GM12878 (cell line): ENCODE measurements at regions of chr2 and their contacts with region 1.

Region 1: DNA sequence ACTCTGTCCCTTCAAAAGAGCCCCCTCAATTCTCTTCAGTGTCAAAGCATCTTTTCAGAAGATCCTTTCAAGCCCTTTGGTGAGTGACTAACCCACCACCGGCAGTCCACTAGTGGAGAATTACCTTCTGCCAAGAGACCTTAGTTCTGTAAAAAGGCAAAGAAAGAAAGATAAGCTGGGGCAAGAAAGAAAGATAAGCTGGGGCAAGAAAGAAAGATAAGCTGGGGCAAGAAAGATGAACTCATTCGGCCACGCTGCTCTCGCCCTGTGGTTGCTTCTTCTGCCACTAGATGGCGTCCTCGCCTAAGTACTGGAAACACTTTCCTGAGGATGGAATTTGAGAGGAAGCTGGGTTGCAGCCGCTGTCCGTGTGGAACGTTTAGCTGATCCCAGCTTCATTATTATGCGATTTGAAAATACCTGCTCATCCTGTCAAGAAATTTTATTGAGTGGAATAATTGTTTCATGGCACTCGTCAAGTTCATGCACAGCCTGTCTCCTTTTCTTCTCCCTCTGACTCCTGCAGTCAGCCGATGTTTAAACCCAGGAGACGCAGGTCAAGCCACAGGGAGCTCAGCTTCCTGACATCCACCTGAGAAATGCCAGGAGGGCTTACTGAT is 17.3 kb upstream of the ANXA4 start:
- DNase-seq: no peak
- ATAC-seq: peak; percentile 98
- H3K4me3 ChIP-seq: peak overlapping the region; percentile 69; the same call in 1 of the 2 replicates
- H3K27ac ChIP-seq: no peak overlapping the region
- H3K4me1 ChIP-seq: no peaks in the 10 kb centered on the region; the same call in 1 of the 2 replicates
- H3K27me3 ChIP-seq: no peaks in the 10 kb centered on the region
- CTCF ChIP-seq: peak; percentile 81 to 85 (median 82)
- EP300 ChIP-seq: no peak
- POLR2A ChIP-seq: no peak
- RAD21 ChIP-seq: peak; percentile 94

Region 2: DNA sequence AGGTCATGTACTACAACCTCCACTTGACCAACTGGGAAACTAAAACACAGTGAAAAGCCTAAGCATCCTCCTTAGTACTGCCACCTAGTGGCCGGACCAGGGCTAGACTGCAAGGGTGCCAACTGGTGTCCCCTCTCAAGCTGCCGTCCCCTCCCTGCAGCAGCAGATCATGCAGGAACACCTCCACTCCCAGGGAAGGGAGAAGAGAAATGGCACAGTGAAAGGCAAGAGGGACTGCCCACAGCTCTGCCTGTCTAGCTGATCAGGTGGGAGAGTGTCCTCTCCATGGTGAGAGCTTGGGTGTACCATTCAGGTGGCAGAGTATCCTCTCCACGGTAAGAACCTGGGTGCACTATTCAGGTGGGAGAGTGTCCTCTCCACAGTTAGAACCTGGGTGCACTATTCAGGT is 159.2 kb before region 1 on chr2:
- CTCF ChIA-PET with region 1: interaction called, 293 read pairs
- POLR2A ChIA-PET with region 1: no interaction called
- RAD21 ChIA-PET with region 1: interaction called, 10 read pairs
- SMC1A ChIA-PET with region 1: interaction called, 16 read pairs
- in situ Hi-C with region 1: no loop called
- intact Hi-C with region 1: no loop called
- DNase-seq: peak; percentile 40
- ATAC-seq: peak; percentile 99
- H3K4me3 ChIP-seq: no peak overlapping the region
- H3K27ac ChIP-seq: no peak overlapping the region
- H3K4me1 ChIP-seq: 0 out of 2 replicates have a peak, but pooled peaks cover 2% of the 10 kb centered on the region
- H3K27me3 ChIP-seq: no peaks in the 10 kb centered on the region
- CTCF ChIP-seq: peak; percentile 83 to 97 (median 89)
- EP300 ChIP-seq: no peak
- POLR2A ChIP-seq: no peak
- RAD21 ChIP-seq: peak; percentile 71

Region 3: DNA sequence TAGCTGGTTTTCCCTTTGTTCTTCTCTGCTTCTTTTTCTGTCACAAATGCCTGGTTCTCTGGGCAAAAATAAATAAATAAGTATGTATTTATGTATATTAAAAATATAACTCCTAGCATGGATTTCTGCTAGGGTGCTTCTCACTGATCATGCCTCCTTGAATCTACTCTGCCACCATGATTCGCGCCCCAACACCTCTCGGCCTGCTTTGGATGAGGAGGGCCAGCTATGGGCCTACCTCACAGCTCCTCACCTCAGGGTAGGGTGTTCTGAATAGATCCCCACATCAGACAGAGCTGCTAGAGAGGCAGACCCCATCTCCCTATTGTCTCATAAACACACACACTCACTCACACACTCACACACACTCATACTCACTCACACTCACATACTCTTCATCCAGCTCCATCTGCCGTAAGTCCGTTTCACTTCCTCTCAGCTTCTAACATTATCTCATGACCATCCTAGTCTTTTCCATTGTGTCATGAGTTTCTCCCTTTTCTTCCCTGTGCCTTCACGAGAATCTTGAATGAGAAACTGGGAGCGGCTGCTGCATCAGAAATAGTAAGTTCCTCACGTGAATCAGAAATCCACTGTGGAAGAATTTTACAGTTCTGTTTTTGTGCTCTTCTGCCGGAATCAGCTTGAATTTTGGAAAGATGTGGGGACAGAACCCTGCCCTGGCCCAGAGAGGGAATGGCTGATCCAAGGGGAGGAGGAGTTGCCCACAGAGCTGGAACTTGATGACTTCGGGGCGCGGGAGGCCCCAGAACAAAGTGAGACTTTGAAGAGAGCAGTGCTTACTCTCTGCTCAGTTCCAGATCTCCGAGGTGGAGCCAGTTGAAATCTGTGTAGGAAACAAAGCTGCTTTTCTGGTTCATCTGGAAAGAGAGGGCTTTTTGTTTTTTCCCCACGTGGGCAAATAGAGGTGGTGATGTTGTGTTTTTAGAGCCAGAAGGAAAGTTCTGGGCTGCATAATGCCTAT is 38.2 kb after region 1 on chr2:
- CTCF ChIA-PET with region 1: interaction called, 28 read pairs
- POLR2A ChIA-PET with region 1: interaction called, 4 read pairs
- RAD21 ChIA-PET with region 1: interaction called, 39 read pairs
- SMC1A ChIA-PET with region 1: interaction called, 28 read pairs
- in situ Hi-C with region 1: no loop called
- intact Hi-C with region 1: no loop called
- DNase-seq: no peak
- ATAC-seq: peak; percentile 46
- H3K4me3 ChIP-seq: no peak overlapping the region
- H3K27ac ChIP-seq: peak overlapping the region; percentile 9; the same call in 1 of the 2 replicates
- H3K4me1 ChIP-seq: peaks cover 44% of the 10 kb centered on the region
- H3K27me3 ChIP-seq: no peaks in the 10 kb centered on the region
- CTCF ChIP-seq: no peak
- EP300 ChIP-seq: no peak
- POLR2A ChIP-seq: no peak
- RAD21 ChIP-seq: no peak

Region 4: GRCh38 chr2:69811018-69811417 is 86.4 kb after region 1 on chr2:
- CTCF ChIA-PET with region 1: interaction called, 408 read pairs
- POLR2A ChIA-PET with region 1: interaction called, 22 read pairs
- RAD21 ChIA-PET with region 1: interaction called, 245 read pairs
- SMC1A ChIA-PET with region 1: interaction called, 290 read pairs
- in situ Hi-C with region 1: loop called (anchors 5 kb)
- intact Hi-C with region 1: no loop called
- DNase-seq: no peak
- ATAC-seq: no peak
- H3K4me3 ChIP-seq: no peak overlapping the region
- H3K27ac ChIP-seq: no peak overlapping the region
- H3K4me1 ChIP-seq: no peaks in the 10 kb centered on the region
- H3K27me3 ChIP-seq: no peaks in the 10 kb centered on the region
- CTCF ChIP-seq: no peak
- EP300 ChIP-seq: no peak
- POLR2A ChIP-seq: no peak
- RAD21 ChIP-seq: no peak

Region 5: DNA sequence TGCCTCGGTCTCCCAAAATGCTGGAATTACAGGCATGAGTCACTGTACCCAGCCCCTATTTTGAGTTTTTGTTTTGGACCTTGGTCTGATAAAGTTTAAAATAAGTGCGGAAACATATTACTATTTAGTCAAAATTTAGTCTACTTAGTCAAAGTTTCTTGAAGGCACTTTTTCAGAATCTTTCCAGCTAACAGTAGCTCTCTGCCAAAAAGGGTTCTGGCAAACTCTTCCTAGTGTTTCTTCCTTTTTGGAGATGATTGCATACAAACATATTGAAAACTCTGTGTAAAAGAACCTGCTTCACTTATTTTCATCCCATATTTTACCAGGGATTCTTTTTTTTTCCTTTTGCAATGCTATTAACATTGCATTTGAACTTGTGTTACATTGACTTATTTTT is 133.6 kb after region 1 on chr2:
- CTCF ChIA-PET with region 1: interaction called, 17 read pairs
- POLR2A ChIA-PET with region 1: no interaction called
- RAD21 ChIA-PET with region 1: interaction called, 6 read pairs
- SMC1A ChIA-PET with region 1: interaction called, 6 read pairs
- in situ Hi-C with region 1: no loop called
- intact Hi-C with region 1: no loop called
- DNase-seq: no peak
- ATAC-seq: no peak
- H3K4me3 ChIP-seq: no peak overlapping the region
- H3K27ac ChIP-seq: no peak overlapping the region
- H3K4me1 ChIP-seq: no peaks in the 10 kb centered on the region
- H3K27me3 ChIP-seq: no peaks in the 10 kb centered on the region
- CTCF ChIP-seq: no peak
- EP300 ChIP-seq: no peak
- POLR2A ChIP-seq: no peak
- RAD21 ChIP-seq: no peak

Region 6: GRCh38 chr2:70070541-70071268 is 346.1 kb after region 1 on chr2:
- CTCF ChIA-PET with region 1: interaction called, 3 read pairs
- POLR2A ChIA-PET with region 1: interaction called, 4 read pairs
- RAD21 ChIA-PET with region 1: interaction called, 11 read pairs
- SMC1A ChIA-PET with region 1: interaction called, 14 read pairs
- in situ Hi-C with region 1: no loop called
- intact Hi-C with region 1: no loop called
- DNase-seq: no peak
- ATAC-seq: peak; percentile 86
- H3K4me3 ChIP-seq: no peak overlapping the region
- H3K27ac ChIP-seq: peak overlapping the region; percentile 89
- H3K4me1 ChIP-seq: peaks cover 18% of the 10 kb centered on the region
- H3K27me3 ChIP-seq: no peaks in the 10 kb centered on the region
- CTCF ChIP-seq: peak; percentile 80 to 90 (median 86)
- EP300 ChIP-seq: no peak
- POLR2A ChIP-seq: peak; percentile 37; the same call in 1 of the 2 replicates
- RAD21 ChIP-seq: peak; percentile 90